Colonic mucosa (tissue), 4 donors: ENCODE measurements at regions of chr10 and their contacts with region 1.

Region 1: DNA sequence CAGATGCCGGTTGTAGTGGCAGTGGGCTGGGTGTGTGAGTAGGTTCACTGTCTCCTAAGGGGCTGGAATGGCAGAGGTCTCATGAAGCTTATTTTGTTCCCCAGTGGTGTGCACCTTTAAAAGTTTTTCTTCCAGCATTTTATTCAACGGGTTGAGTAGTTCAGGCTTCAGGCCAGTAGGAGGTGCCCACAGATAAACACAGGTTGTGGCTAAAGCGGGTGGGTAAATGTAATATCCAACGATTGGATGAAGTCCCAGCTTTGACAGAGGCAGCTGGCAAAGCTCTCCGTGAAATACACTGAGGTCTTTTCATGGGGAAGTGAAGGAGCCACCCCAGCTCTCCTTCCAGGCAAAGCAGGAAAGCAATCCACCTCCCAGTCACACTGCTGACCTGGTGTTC is 339.8 kb upstream of the LRRTM3 start:
- DNase-seq: peak; percentile 18
- H3K4me3 ChIP-seq: no peak overlapping the region
- H3K27ac ChIP-seq: no peak overlapping the region
- H3K4me1 ChIP-seq: no peaks in the 10 kb centered on the region
- H3K27me3 ChIP-seq: no peaks in the 10 kb centered on the region
- CTCF ChIP-seq: no peak

Region 2: GRCh38 chr10:66925896-66926715 is 340.0 kb after region 1 on chr10 and contains the start of gene LRRTM3:
- intact Hi-C with region 1: loop called (anchors 5 kb)
- DNase-seq: peak; percentile 37
- H3K4me3 ChIP-seq: no peak within 1 kb of the TSS
- H3K27ac ChIP-seq: no peak within 1 kb of the TSS
- H3K4me1 ChIP-seq: no peaks in the 10 kb centered on the region
- H3K27me3 ChIP-seq: peaks cover 14% of the 10 kb centered on the region
- CTCF ChIP-seq: peak; percentile 50
- total RNA-seq, gene LRRTM3: not detected

Region 3: GRCh38 chr10:68271196-68271882 is 1685.3 kb after region 1 on chr10:
- intact Hi-C with region 1: no loop called
- DNase-seq: no peak
- H3K4me3 ChIP-seq: no peak overlapping the region
- H3K27ac ChIP-seq: no peak overlapping the region
- H3K4me1 ChIP-seq: no peaks in the 10 kb centered on the region
- H3K27me3 ChIP-seq: no peaks in the 10 kb centered on the region
- CTCF ChIP-seq: no peak